Left colon (tissue), 2 donors: ENCODE measurements at regions of chr20 and their contacts with region 1.

Region 1: DNA sequence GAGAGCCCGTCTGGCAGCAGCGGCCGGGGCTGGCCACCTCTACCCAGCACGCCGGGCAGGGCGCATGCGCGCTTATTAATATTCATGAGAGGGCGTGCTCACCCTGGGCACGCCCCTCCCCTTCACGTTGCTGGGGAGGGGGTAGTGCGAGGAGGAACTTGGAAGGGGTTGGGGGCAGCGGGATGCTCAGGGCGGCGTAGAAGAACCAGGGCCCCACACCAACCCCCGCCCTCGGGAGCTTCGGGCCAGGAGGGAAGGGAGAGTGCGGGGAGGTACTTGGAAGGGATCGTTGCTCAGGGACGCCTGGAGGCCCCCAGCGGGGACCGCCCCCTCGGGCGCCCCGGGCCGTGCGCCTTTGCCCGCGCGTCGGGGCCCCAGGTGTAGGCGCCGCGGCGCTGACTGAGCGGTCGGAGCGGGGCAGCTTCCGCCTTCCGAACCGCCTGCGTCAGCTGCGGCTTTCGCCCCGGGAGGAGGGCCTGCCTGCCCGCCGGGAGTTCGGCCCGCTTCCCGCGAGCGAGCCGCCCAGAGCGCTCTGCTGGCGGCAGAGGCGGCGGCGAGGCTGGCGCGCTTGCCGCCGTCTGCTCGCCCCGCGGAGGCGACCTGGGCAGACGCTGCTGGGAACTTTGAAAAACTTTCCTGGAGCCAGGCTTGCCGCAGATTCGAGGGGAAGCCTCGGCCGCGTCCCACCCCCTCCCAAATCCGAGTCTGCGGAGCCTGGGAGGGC is at the start of gene JAG1:
- DNase-seq: peak; percentile 95 to 97
- ATAC-seq: peak; percentile 72
- total RNA-seq, gene JAG1: 78.8 to 170 TPM

Region 2: DNA sequence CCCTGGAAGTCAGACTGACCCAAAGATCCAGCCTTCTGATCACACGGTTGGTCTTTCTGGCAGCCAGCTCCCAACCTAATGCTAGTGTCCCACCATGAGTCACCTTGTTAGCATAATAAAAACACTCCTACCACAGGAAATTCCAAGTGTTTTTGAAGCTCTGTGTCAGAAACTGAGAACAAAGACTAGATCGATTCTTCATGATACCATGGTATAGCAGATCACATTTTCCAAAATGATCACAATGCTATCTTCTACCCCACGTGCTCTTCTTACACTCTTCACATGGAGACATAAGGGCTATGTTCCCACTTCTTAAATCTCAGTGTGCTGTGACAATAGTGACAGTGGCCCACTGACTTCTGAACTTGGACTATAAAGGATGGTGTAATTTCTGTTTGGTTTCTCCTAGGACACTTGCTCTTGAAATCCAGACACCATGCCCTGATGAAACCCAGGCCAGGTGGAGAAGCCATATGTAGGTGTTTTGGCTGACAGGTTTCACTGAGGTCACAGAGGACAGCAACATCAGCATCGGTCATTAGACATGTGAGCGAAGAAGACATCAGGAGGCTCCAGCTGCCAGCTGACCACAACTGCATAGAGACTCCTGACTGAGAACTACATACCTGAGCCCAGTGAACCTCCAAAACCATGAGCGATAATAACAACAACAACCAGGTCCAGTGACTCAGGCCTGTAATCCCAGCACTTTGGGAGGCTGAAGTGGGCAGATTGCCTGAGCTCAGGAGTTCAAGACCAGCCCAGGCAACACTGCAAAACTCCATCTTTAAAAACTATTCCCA is 297.7 kb before region 1 on chr20:
- intact Hi-C with region 1: no loop called
- DNase-seq: no peak
- ATAC-seq: no peak

Region 3: GRCh38 chr20:10469599-10469998 is 204.6 kb before region 1 on chr20:
- intact Hi-C with region 1: loop called in 1 of 2 experiments (anchors 5 kb)
- DNase-seq: peak; percentile 50 to 56
- ATAC-seq: peak; percentile 92

Region 4: GRCh38 chr20:10728873-10729670 is 54.9 kb after region 1 on chr20:
- intact Hi-C with region 1: no loop called
- DNase-seq: no peak
- ATAC-seq: peak; percentile 40